GM18951 (cell line): ENCODE measurements at regions of chr7 and their contacts with region 1.

Region 1: DNA sequence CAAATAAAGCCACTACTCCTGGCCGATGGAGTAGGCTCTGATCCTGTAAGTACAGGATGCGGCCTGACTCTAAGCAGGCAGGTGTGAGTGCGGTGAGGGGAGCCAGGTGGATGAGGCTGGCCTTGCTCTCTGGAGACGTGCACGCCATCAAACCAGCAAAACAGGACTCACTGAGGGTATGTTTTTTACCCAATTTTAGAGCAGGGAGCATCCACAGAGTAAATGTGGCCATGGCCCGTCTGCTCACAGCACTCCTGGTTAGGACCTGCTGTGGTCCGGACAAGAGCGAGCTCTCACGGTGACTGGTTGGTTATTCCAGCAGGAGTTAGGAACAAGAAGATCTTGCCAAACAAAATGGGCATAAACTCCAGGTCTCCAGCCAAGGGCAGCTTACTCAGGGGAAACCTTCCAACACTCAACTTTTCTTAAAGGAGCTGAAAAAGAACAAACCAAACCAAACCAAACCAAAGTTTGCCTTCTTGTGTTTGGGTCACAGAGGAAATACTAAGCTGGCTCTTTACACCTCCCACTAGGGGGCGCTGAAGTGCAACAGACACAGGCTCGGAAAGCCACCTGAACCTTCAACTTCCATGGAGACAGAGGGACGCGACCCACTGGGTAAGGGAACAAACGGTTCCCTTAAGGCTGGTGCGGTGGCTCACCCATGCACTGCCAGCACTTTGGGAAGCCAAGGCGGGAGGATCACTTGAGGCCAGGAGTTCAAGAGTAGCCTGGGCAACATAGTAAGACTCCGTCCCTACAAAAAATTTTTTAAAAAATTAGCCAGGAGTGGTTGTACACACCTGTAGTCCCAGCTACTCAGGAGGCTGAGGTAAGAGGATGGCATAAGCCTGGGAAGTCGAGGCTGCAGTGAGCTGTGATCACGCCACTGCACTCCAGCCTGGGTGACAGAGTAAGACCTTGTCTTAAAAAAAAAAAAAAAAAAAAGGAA is 122.4 kb downstream of the CLEC2L start:
- POLR2A ChIP-seq: no peak

Region 2: GRCh38 chr7:139457153-139457940 is 188.5 kb before region 1 on chr7:
- in situ Hi-C with region 1: no loop called
- POLR2A ChIP-seq: no peak

Region 3: DNA sequence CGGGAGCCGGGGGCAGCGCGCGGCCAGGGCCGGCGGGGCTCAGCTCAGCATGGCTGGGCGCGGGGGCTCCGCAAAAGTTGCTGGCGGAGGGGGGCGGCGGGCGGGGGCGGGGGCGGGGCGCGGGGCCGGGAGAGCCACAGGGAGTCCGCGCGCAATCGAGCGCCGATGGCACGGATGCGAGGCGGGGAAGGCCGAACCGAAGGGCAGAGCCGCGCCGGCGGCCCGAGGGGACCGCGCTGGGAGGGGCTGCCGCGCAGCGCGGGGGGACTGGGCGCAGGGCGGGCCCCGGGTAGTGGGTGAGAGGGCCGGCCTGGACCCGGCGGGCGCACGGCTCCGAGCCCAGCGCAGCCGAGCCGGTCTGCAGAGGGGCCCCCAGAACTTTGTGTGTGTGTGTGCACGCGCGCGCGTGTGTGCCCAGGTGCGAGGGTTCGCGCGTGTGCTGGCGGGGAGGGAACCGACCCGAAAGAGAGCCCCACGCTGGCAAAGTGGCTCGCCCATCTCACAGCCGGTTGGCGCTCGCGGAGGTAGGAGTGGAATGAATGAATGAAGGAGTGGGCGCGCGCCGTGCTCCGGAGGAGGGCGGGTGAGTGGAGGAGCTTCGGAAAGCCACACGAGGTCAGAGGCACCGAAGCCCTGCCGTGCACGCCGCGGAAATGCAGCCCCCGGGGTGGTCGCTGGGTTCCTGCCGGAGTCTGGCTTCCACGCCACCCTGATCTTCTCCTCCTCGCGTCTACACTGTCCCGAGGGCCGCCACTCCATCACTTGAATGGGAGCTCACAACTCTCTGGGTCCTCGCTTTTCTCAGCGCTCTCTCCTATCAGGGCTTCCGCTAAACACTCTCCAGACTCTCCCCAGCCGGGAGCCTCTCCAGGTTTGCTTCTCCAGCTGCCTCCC is 132.3 kb after region 1 on chr7 and contains the start of gene HIPK2:
- in situ Hi-C with region 1: loop called (anchors 10 kb)
- POLR2A ChIP-seq: peak; percentile 54